ENCODE measurements at regions of chr12 and their contacts with region 1.

Region 1: DNA sequence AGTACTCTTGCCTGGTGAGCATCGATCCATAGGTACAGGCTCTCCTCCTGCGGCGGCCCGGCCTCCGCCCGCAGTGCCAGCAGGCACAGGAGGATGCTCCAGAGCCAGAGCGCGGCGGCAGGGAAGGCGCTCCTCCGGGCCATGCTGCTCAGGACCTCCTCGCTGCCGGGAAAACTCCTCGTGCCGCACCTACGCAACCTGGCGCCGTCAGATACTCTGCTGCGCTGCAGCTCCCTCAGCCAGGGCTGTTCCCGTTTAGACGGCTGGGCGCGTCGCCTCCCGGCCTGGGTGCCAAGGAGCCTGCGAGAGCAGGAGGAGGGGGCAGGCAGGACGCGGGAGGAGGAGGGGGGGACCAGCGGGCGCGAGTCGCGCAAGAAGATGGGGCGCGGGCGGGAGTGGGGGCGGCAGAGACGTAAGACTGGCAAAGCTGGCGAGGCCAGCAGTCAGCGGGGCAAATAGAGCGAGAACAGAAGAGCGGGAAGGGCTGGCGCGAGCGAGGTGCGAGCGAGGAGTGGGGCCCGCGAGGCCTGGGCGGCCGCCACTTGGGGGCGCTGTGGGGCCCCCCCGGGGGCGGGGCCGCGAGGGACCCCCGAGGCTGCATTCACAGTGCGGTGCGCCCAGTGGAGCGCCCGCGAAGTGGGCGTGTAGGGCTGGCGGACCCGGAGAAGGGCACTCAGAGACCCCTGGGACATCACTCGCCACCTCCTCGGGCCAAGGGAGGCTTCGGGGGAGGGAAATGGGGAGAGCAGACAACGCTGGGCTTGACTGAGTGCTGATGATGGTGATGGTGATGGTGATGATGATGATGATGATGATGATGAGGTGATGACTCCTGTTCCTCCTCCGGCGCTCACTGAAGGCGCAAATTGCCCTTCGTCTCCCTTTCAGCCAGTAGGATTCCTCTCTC is at the start of gene WIF1:
- DNase-seq: peak in 38 of 42 donors; percentile 17 to 78 (median 48)

Region 2: DNA sequence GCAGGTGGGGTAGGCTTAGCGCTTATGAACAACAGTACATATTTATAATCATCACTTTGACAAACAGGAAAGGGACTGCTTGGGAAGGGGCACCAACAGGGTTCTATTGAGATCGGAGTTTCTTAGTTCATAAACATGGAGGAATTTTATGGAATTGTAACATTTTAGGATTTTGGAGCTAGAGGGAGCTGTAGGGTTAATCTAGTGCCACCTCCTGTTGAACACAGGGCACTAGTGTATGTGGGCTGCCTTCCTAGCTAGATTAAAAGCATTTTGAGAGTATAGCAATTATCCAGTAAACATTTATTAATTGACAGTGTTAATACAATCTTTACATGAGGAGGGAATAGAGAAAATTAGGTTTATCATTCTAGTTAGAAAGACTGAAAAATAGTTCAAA is 319.9 kb before region 1 on chr12:
- intact Hi-C with region 1: loop called (anchors 10 kb)
- DNase-seq: no peak

Region 3: DNA sequence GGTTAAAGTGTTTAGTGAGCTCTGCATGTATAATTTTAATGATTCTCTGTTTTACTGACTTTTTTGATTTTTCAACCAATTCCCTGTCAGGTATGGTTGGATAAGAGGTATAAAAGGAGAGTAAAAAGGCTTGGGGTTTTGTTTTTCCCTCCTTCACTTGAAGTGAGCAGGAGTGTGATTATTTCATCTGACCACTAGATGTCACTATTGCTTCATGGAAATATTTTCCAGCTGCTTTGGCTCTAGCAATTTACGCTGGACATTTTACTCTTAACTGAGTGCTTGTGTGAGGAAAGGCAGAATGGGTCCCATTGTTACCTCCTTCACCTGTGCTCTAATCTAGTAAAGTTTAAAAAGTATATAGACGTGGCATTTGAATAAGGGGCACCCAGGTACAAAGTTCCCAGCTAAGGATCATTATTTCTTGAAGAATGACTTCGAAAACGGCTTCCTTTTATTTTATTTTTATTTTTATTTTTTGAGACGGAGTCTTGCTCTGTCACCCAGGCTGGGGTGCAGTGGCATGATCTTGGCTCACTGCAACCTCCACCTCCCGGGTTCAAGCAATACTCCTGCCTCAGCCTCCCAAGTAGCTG is 230.3 kb before region 1 on chr12:
- intact Hi-C with region 1: loop called (anchors 5 kb)
- DNase-seq: peak in 2 of 42 donors; percentile 22 to 61

Region 4: GRCh38 chr12:65699251-65699650 is 577.9 kb after region 1 on chr12:
- intact Hi-C with region 1: no loop called
- DNase-seq: no peak